ENCODE measurements at regions of chr2 and their contacts with region 1.

Region 1: DNA sequence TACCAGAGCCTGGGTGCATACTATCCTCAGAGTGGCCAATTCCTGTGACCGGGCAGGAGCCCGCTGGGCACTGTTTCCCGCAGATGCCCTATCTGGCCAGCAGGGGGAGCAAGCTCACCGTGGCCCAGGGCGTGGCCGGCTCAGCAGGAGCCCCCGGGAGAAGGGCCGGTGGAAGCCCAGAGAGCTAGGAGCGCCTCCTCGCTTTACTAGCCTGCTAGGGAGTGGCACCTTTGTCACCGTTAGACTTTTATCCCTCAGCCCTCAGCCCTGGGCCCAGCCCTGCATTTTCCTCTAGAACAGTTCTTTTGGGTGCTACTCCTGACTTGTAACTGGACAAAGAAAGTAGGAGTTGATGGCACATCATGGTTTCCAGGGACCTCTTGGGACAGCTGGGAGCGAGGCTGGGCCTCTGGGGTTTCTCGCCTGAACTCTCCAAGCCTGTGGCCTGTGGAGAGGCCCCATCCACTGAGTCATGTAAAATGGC is 24.0 kb downstream of the TMEM177 start:
- DNase-seq: peak; percentile 74
- H3K4me3 Mint-ChIP-seq: no peak overlapping the region
- H3K27ac Mint-ChIP-seq: no peak overlapping the region
- H3K4me1 Mint-ChIP-seq: peaks cover 16% of the 10 kb centered on the region
- H3K27me3 Mint-ChIP-seq: no peaks in the 10 kb centered on the region

Region 2: GRCh38 chr2:117862459-117862858 is 1840.5 kb before region 1 on chr2:
- CTCF ChIA-PET with region 1: no interaction called
- intact Hi-C with region 1: no loop called
- DNase-seq: no peak
- H3K4me3 Mint-ChIP-seq: no peak overlapping the region
- H3K27ac Mint-ChIP-seq: no peak overlapping the region
- H3K4me1 Mint-ChIP-seq: peaks cover 2% of the 10 kb centered on the region
- H3K27me3 Mint-ChIP-seq: peaks cover 24% of the 10 kb centered on the region

Region 3: DNA sequence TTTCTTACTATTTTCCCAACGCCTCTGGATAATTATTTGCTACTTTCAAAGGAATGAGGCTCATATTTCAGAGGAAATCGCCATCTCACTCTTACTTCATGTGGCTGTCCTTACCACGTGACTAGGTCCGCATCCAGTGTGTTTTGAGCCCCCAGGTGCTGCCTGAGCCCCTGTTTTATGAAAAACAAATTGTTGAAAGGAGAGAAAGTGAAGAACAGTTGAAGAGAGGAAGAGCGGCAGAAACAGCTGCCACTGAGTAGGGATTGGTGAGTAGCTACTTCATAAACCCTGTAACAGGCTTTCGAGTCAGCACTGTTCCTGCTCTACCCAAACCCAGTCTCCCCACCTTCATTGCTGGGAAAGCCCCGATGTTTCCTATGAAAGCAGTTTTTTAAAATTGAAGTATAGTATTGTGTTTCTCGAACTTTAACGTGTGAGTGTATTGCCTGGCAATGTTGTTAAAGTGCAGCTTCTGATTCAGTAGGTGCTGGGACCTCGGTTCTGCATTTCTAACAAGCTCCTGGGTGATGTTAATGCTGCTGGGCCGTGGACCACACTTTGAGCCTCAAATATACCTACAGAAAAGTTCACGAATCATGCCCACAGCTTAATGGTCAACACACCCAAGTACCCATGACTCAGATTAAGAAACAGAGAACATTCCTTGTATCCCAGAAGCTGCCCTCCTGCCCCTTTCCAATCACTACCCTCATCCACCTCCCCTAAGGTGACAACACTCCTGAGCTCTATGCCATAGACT is 15.7 kb after region 1 on chr2:
- CTCF ChIA-PET with region 1: interaction called, 13 read pairs
- intact Hi-C with region 1: no loop called
- DNase-seq: peak; percentile 22
- H3K4me3 Mint-ChIP-seq: no peak overlapping the region
- H3K27ac Mint-ChIP-seq: no peak overlapping the region
- H3K4me1 Mint-ChIP-seq: no peaks in the 10 kb centered on the region
- H3K27me3 Mint-ChIP-seq: no peaks in the 10 kb centered on the region

Region 4: DNA sequence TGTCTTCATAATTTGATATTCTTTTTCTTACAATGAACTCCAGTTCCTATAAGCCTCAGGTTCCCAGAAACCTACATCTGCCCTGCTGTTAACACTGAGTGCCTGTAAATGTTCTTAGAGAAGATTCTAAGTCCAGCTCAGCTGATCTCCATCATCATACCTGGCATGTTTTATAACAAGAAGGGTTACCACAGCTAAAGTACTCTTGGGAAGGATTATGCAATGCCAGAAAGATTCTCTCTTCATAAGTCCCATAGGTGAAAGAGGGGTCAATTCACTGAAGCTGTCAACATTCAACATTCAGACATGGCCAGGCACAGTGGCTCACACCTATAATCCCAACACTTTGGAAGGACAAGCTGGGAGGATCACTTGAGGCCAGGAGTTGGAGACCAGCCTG is 25.5 kb after region 1 on chr2:
- CTCF ChIA-PET with region 1: interaction called, 12 read pairs
- intact Hi-C with region 1: no loop called
- DNase-seq: no peak
- H3K4me3 Mint-ChIP-seq: no peak overlapping the region
- H3K27ac Mint-ChIP-seq: no peak overlapping the region
- H3K4me1 Mint-ChIP-seq: no peaks in the 10 kb centered on the region
- H3K27me3 Mint-ChIP-seq: no peaks in the 10 kb centered on the region

Region 5: GRCh38 chr2:119826370-119826961 is 123.5 kb after region 1 on chr2:
- CTCF ChIA-PET with region 1: interaction called, 6 read pairs
- intact Hi-C with region 1: loop called (anchors 1 kb)
- DNase-seq: peak; percentile 58
- H3K4me3 Mint-ChIP-seq: no peak overlapping the region
- H3K27ac Mint-ChIP-seq: no peak overlapping the region
- H3K4me1 Mint-ChIP-seq: peaks cover 43% of the 10 kb centered on the region
- H3K27me3 Mint-ChIP-seq: no peaks in the 10 kb centered on the region

Region 6: GRCh38 chr2:119871725-119872124 is 168.8 kb after region 1 on chr2:
- CTCF ChIA-PET with region 1: no interaction called
- intact Hi-C with region 1: no loop called
- DNase-seq: no peak
- H3K4me3 Mint-ChIP-seq: no peak overlapping the region
- H3K27ac Mint-ChIP-seq: no peak overlapping the region
- H3K4me1 Mint-ChIP-seq: peaks cover 36% of the 10 kb centered on the region
- H3K27me3 Mint-ChIP-seq: no peaks in the 10 kb centered on the region

Measured in activated naive CD4-positive, alpha-beta T cell treated with anti-CD3 and anti-CD28 coated beads for 36 hours (primary cell).